ENCODE measurements at regions of chr1 and their contacts with region 1.

Region 1: GRCh38 chr1:11272832-11273594 is at the start of gene UBIAD1:
- DNase-seq: peak; percentile 74
- H3K4me3 Mint-ChIP-seq: peak within 1 kb of the TSS; percentile 97
- H3K27ac Mint-ChIP-seq: peak within 1 kb of the TSS; percentile 92
- H3K4me1 Mint-ChIP-seq: peaks cover 23% of the 10 kb centered on the region
- H3K27me3 Mint-ChIP-seq: no peaks in the 10 kb centered on the region
- total RNA-seq, gene UBIAD1: 22.7 and 25.1 TPM in 2 replicates

Region 2: GRCh38 chr1:11262171-11263049 is 10.6 kb before region 1 on chr1 and contains the start of gene MTOR:
- intact Hi-C with region 1: loop called (anchors 1 kb)
- DNase-seq: peak; percentile 98
- H3K4me3 Mint-ChIP-seq: peak within 1 kb of the TSS; percentile 93
- H3K27ac Mint-ChIP-seq: peak within 1 kb of the TSS; percentile 85
- H3K4me1 Mint-ChIP-seq: peaks cover 11% of the 10 kb centered on the region
- H3K27me3 Mint-ChIP-seq: no peaks in the 10 kb centered on the region
- total RNA-seq, gene MTOR: 43.3 and 44.5 TPM in 2 replicates

Region 3: GRCh38 chr1:11805447-11806306 is 532.7 kb after region 1 on chr1 and contains the starts of genes CLCN6 and MTHFR:
- intact Hi-C with region 1: loop called (anchors 5 kb)
- DNase-seq: peak; percentile 99
- H3K4me3 Mint-ChIP-seq: peak within 1 kb of the TSS; percentile 90
- H3K27ac Mint-ChIP-seq: peak within 1 kb of the TSS; percentile 88
- H3K4me1 Mint-ChIP-seq: peaks cover 56% of the 10 kb centered on the region
- H3K27me3 Mint-ChIP-seq: no peaks in the 10 kb centered on the region
- total RNA-seq, gene CLCN6: 18.8 and 18.9 TPM in 2 replicates
- total RNA-seq, gene MTHFR: 18.8 and 21.4 TPM in 2 replicates

Region 4: GRCh38 chr1:11934302-11935056 is 661.5 kb after region 1 on chr1 and contains the start of gene PLOD1:
- intact Hi-C with region 1: loop called (anchors 10 kb)
- DNase-seq: peak; percentile 76
- H3K4me3 Mint-ChIP-seq: peak within 1 kb of the TSS; percentile 82
- H3K27ac Mint-ChIP-seq: peak within 1 kb of the TSS; percentile 38
- H3K4me1 Mint-ChIP-seq: peaks cover 8% of the 10 kb centered on the region
- H3K27me3 Mint-ChIP-seq: no peaks in the 10 kb centered on the region
- total RNA-seq, gene PLOD1: 39.4 and 44.0 TPM in 2 replicates

Measured in activated T-helper 2 cell treated with anti-CD3 and anti-CD28 coated beads, Interferon-gamma antibody, Interleukin-2, Interleukin-4, amounts not matched to agents 10 μg/mL and 5 μg/mL and 100 μg/mL, durations not matched to agents 14 hours and 24 hours and 36 hours (primary cell).